Transverse colon (tissue), 4 donors: ENCODE measurements at regions of chr2 and their contacts with region 1.

Region 1: DNA sequence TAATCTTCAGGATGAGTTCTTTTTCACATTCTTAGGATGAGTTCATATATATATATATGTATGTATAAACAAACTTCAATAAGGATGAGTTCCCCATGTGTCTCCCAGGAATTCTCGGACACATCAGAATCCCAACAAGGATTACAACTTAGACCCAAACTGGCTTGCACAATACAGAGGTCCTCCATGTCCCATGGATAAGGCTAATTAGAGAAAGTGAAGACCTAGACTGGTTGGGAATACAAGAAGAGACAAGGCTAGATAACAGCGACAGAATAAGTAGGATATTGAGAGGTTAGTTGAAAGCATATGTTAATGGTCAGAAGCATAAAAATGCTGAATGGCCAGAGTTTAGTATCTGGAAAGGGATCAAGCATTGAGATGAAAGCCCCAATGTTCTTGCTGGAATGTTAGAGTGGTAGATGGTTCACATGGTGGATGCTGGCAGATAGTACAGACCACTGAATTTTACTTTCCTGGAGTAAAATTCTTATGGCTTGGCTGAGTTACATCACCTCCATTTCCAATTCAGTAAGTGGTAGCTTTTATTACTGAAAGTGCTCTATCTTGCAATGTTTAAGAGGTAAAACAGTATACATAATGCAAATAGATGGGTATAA is 154.9 kb upstream of the EPHA4 start:
- DNase-seq: no peak
- H3K4me3 ChIP-seq: no peak overlapping the region
- H3K27ac ChIP-seq: no peak overlapping the region
- H3K4me1 ChIP-seq: no peaks in the 10 kb centered on the region
- H3K27me3 ChIP-seq: no peaks in the 10 kb centered on the region
- CTCF ChIP-seq: no peak
- EP300 ChIP-seq: no peak
- POLR2A ChIP-seq: no peak

Region 2: DNA sequence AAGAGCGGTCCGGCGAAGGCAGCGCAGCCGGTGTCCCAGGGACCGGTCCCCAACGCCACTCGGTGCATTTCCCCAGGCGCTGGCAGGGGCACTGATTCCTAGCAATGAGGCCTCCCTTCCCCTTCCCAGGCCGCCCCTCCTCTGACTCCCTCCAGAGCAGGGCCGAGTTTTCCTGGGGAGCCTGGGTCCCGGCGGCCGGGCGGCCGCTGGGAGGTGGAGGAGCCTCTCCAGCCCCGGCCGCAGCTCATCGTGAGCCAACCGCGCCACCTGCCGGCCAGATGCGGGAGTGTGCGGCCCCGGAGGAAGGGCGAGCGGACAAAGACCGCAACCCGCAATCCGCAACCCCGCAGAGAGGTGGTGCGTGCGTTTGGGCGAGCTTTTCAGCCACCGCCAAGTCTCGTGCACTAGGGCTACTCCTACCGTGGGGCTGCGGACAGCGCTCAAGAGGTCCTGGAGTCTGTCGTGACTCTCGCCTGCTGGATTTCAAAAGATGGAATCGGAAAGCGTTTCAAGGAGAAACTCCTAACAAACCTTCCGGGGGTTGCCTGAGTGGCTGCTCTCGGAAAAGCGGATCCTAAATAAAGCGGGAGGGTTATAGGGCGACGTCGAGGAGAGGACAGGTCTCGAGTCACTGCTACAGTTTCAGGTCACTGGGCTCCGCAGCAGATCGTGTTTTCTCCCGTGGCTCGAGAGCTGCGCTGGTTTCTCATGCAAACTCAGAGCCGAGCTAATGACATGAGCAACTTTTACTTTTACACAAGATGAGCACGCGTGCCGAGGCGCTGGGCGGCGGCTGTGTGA is 153.4 kb before region 1 on chr2:
- in situ Hi-C with region 1: no loop called
- intact Hi-C with region 1: no loop called
- DNase-seq: peak; percentile 89
- H3K4me3 ChIP-seq: peak overlapping the region; percentile 58 to 76 (median 69)
- H3K27ac ChIP-seq: peak overlapping the region; percentile 86 to 90 (median 90)
- H3K4me1 ChIP-seq: peaks cover 6 to 35% (median 19%) of the 10 kb centered on the region in 4 donors
- H3K27me3 ChIP-seq: peaks cover 26% of the 10 kb centered on the region
- CTCF ChIP-seq: peak; percentile 97 to 99 (median 98)
- EP300 ChIP-seq: no peak
- POLR2A ChIP-seq: no peak

Region 3: DNA sequence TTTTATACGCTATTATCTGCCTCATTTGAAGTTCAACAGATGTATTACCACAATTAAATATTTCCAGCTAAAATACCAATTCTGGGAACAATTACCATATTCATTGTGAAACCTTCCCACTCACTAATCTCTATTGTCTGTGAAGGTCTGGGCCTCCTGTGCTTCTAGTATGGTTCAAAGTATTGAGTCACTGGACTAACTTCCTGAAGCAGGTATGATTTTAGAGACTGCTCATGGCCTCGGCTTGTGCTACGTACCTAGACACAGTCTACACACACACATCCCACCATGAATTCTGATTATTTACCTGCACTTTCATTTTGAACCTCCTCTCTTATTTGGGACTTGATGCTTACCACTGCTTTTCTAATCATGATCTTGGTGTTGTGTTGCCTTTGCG is 25.8 kb after region 1 on chr2:
- in situ Hi-C with region 1: no loop called
- intact Hi-C with region 1: loop called (anchors 1 kb)
- DNase-seq: no peak
- H3K4me3 ChIP-seq: no peak overlapping the region
- H3K27ac ChIP-seq: no peak overlapping the region
- H3K4me1 ChIP-seq: no peaks in the 10 kb centered on the region
- H3K27me3 ChIP-seq: no peaks in the 10 kb centered on the region
- CTCF ChIP-seq: no peak
- EP300 ChIP-seq: no peak
- POLR2A ChIP-seq: no peak